ENCODE measurements at regions of chr10 and their contacts with region 1.

Region 1: GRCh38 chr10:95601116-95601719 is 40.0 kb upstream of the SORBS1 start:
- DNase-seq: peak in 4 of 5 donors; percentile 18 to 41 (median 31)
- H3K4me3 ChIP-seq: no peak overlapping the region
- H3K4me3 Mint-ChIP-seq: no peak overlapping the region
- H3K27ac ChIP-seq: no peak overlapping the region
- H3K27ac Mint-ChIP-seq: peak overlapping the region in 2 of 7 donors; percentile 18 to 50
- H3K4me1 ChIP-seq: no peaks in the 10 kb centered on the region
- H3K4me1 Mint-ChIP-seq: peaks cover 0 to 1% (median 0%) of the 10 kb centered on the region in 4 donors
- H3K27me3 ChIP-seq: no peaks in the 10 kb centered on the region
- H3K27me3 Mint-ChIP-seq: peaks cover 4% of the 10 kb centered on the region in 2 donors

Region 2: GRCh38 chr10:95246579-95247051 is 354.6 kb before region 1 on chr10:
- CTCF ChIA-PET with region 1: interaction called, 3 read pairs
- POLR2A ChIA-PET with region 1: no interaction called
- intact Hi-C with region 1: loop called (anchors 2 kb)
- DNase-seq: peak in 4 of 5 donors; percentile 20 to 39 (median 31)
- H3K4me3 ChIP-seq: no peak overlapping the region
- H3K4me3 Mint-ChIP-seq: no peak overlapping the region
- H3K27ac ChIP-seq: no peak overlapping the region
- H3K27ac Mint-ChIP-seq: no peak overlapping the region
- H3K4me1 ChIP-seq: no peaks in the 10 kb centered on the region
- H3K4me1 Mint-ChIP-seq: no peaks in the 10 kb centered on the region
- H3K27me3 ChIP-seq: peaks cover 5% of the 10 kb centered on the region
- H3K27me3 Mint-ChIP-seq: peaks cover 5 to 19% of the 10 kb centered on the region in 2 donors

Region 3: GRCh38 chr10:95308389-95309302 is 292.6 kb before region 1 on chr10:
- CTCF ChIA-PET with region 1: no interaction called
- POLR2A ChIA-PET with region 1: no interaction called
- intact Hi-C with region 1: no loop called
- DNase-seq: no peak
- H3K4me3 ChIP-seq: no peak overlapping the region
- H3K4me3 Mint-ChIP-seq: no peak overlapping the region
- H3K27ac ChIP-seq: no peak overlapping the region
- H3K27ac Mint-ChIP-seq: no peak overlapping the region
- H3K4me1 ChIP-seq: no peaks in the 10 kb centered on the region
- H3K4me1 Mint-ChIP-seq: no peaks in the 10 kb centered on the region
- H3K27me3 ChIP-seq: no peaks in the 10 kb centered on the region
- H3K27me3 Mint-ChIP-seq: peaks cover 2 to 6% of the 10 kb centered on the region in 2 donors

Region 4: DNA sequence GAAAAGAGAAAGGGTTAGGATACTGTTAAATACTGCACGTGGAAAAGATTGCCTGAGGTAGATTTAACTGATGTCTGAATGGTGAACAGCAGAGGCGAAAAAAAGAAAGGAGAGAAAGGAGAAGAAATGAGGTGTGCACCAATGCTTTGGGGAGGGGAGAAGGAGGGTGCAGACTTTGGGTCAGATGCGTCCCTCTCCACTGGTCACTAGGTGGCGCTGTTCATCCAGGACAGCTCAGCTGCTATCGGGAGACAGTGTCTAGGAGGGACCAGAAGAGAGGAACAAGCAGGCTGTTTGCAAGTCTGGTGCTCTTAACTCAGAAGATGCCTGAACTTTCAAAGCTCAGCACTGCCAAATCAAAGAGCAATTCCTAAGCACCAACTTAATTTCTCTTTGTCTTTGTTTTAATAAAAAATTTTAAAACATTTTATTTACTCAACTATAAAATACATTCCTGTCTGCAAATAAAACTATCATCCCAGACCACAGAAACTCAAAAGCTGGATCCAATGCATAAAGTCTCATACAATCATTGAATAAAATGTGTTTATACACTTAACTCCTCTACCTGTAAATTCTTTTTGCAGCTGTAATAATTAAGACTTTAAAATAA is 226.5 kb before region 1 on chr10:
- CTCF ChIA-PET with region 1: no interaction called
- POLR2A ChIA-PET with region 1: no interaction called
- intact Hi-C with region 1: loop called (anchors 1 kb)
- DNase-seq: peak in 4 of 5 donors; percentile 5 to 26 (median 14)
- H3K4me3 ChIP-seq: no peak overlapping the region
- H3K4me3 Mint-ChIP-seq: no peak overlapping the region
- H3K27ac ChIP-seq: no peak overlapping the region
- H3K27ac Mint-ChIP-seq: no peak overlapping the region
- H3K4me1 ChIP-seq: peaks cover 6% of the 10 kb centered on the region
- H3K4me1 Mint-ChIP-seq: peaks cover 2 to 7% (median 6%) of the 10 kb centered on the region in 4 donors
- H3K27me3 ChIP-seq: no peaks in the 10 kb centered on the region
- H3K27me3 Mint-ChIP-seq: peaks cover 7 to 15% of the 10 kb centered on the region in 2 donors

Region 5: DNA sequence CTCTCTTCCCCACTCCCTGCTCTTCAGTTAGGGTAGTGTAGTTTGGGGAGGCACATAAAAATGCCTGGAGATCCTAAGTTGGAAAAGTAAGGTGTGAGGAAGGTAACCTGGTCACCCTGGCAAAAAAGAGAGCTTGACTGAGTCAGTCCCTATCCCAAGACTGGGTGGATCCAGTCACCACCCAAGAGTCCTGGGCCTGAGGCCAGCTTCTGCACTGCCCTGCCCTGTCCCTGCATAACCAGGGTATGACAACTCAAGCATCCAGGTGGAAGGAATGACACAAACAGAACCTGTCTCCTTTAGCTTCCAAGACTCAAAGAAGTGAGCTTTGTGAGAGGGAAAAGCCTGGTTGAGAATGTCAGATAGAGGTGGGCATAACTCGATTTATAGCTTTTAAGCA is 13.2 kb before region 1 on chr10:
- CTCF ChIA-PET with region 1: interaction called, 13 read pairs
- POLR2A ChIA-PET with region 1: interaction called, 3 read pairs
- intact Hi-C with region 1: no loop called
- DNase-seq: no peak
- H3K4me3 ChIP-seq: no peak overlapping the region
- H3K4me3 Mint-ChIP-seq: no peak overlapping the region
- H3K27ac ChIP-seq: no peak overlapping the region
- H3K27ac Mint-ChIP-seq: no peak overlapping the region
- H3K4me1 ChIP-seq: no peaks in the 10 kb centered on the region
- H3K4me1 Mint-ChIP-seq: no peaks in the 10 kb centered on the region
- H3K27me3 ChIP-seq: no peaks in the 10 kb centered on the region
- H3K27me3 Mint-ChIP-seq: peaks cover 5 to 19% of the 10 kb centered on the region in 2 donors

Region 6: DNA sequence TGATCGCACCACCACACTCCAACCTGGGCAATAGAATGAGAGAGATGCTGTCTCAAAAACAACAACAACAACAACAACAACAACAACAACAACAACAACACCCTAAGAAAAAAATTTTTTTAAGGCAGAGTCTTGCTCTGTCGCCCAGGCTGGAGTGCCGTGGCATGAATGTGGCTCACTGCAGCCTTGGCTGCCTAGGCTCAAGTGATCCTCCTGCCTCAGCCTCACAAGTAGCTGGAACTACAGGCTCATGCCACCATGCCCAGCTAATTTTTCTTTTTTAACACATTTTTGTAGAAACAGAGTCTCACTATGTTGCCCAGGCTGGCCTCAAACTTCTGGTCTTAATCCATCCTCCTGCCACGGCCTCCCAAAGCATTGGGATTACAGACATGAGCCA is 36.7 kb after region 1 on chr10:
- CTCF ChIA-PET with region 1: no interaction called
- POLR2A ChIA-PET with region 1: no interaction called
- intact Hi-C with region 1: no loop called
- DNase-seq: no peak
- H3K4me3 ChIP-seq: no peak overlapping the region
- H3K4me3 Mint-ChIP-seq: no peak overlapping the region
- H3K27ac ChIP-seq: no peak overlapping the region
- H3K27ac Mint-ChIP-seq: no peak overlapping the region
- H3K4me1 ChIP-seq: no peaks in the 10 kb centered on the region
- H3K4me1 Mint-ChIP-seq: peaks cover 0 to 3% (median 0%) of the 10 kb centered on the region in 4 donors
- H3K27me3 ChIP-seq: no peaks in the 10 kb centered on the region
- H3K27me3 Mint-ChIP-seq: no peaks in the 10 kb centered on the region